Activated T-helper 2 cell treated with anti-CD3 and anti-CD28 coated beads, Interferon-gamma antibody, Interleukin-2, Interleukin-4, amounts not matched to agents 10 μg/mL and 5 μg/mL and 100 μg/mL, durations not matched to agents 14 hours and 24 hours and 36 hours (primary cell): ENCODE measurements at regions of chr1 and their contacts with region 1.

Region 1: GRCh38 chr1:205591522-205592351 is 40.1 kb downstream of the ELK4 start:
- DNase-seq: peak; percentile 80
- H3K4me3 Mint-ChIP-seq: peak overlapping the region; percentile 82
- H3K27ac Mint-ChIP-seq: peak overlapping the region; percentile 75
- H3K4me1 Mint-ChIP-seq: peaks cover 51% of the 10 kb centered on the region
- H3K27me3 Mint-ChIP-seq: no peaks in the 10 kb centered on the region

Region 2: GRCh38 chr1:205528887-205529825 is 62.6 kb before region 1 on chr1:
- intact Hi-C with region 1: loop called (anchors 5 kb)
- DNase-seq: peak; percentile 70
- H3K4me3 Mint-ChIP-seq: peak overlapping the region; percentile 37
- H3K27ac Mint-ChIP-seq: no peak overlapping the region
- H3K4me1 Mint-ChIP-seq: peaks cover 3% of the 10 kb centered on the region
- H3K27me3 Mint-ChIP-seq: peaks cover 11% of the 10 kb centered on the region